ENCODE measurements at regions of chr1 and their contacts with region 1.

Region 1: GRCh38 chr1:116372587-116373444 is at the start of gene ATP1A1:
- DNase-seq: peak; percentile 98
- H3K4me3 Mint-ChIP-seq: peak within 1 kb of the TSS; percentile 98
- H3K27ac Mint-ChIP-seq: peak within 1 kb of the TSS; percentile 89
- H3K4me1 Mint-ChIP-seq: peaks cover 43% of the 10 kb centered on the region
- H3K27me3 Mint-ChIP-seq: peaks cover 26% of the 10 kb centered on the region
- total RNA-seq, gene ATP1A1: 238 to 241 TPM

Region 2: DNA sequence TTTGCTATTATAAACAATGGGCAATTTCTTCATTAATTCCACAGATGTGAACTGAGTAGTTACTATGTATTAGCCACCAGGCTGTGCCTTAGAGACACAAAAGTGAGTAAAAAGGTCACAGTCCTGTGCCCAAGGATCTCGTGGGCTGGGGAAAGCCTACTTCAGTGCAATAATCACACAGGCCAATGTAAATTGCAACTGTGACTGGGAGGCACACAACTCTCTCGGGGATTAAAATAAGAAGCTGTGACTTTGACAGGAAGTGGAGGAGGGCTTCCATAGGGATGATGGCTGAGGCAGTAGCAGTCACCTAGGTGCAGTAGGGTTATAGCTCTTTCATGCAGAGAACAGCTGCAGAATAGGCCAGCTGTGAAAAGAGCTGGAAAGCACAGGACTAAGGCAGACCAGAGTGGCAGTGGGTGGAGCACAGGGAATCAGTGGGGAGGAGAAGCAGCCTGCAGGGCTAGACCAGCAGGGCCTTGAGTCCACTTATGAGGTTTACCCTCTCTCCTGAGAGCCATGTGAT is 139.8 kb before region 1 on chr1:
- CTCF ChIA-PET with region 1: no interaction called
- POLR2A ChIA-PET with region 1: no interaction called
- DNase-seq: no peak
- H3K4me3 Mint-ChIP-seq: no peak overlapping the region
- H3K27ac Mint-ChIP-seq: no peak overlapping the region
- H3K4me1 Mint-ChIP-seq: no peaks in the 10 kb centered on the region
- H3K27me3 Mint-ChIP-seq: no peaks in the 10 kb centered on the region

Region 3: DNA sequence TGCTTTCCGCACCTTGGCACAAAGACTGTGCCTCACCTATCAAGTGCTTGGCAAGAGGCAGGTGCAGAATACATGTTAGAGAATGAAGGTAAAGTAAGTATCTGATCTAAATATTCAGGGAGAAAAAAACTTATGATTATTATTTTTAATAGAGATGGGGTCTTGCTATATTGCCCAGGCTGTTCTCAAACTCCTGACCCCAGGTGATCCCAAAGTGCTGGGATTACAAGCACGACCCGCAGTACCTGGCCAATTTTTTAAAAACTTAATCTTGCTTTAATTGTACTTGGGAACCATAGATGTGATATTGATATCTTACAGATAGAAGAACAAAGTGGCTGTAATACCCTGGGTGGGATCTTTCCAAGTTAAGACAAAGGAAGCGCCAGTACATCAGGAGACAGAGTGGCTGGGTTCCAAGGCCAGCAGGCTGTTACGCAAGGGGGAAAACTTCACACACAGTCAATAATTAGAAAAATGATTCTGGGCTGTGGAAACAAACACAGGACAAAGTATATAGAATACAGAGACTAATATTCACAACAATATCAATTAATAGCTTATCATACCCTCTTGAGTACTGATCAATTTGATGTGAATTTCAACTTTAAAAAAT is 58.4 kb before region 1 on chr1:
- CTCF ChIA-PET with region 1: no interaction called
- POLR2A ChIA-PET with region 1: no interaction called
- DNase-seq: no peak
- H3K4me3 Mint-ChIP-seq: no peak overlapping the region
- H3K27ac Mint-ChIP-seq: no peak overlapping the region
- H3K4me1 Mint-ChIP-seq: no peaks in the 10 kb centered on the region
- H3K27me3 Mint-ChIP-seq: no peaks in the 10 kb centered on the region

Region 4: GRCh38 chr1:116325922-116326321 is 46.9 kb before region 1 on chr1:
- CTCF ChIA-PET with region 1: no interaction called
- POLR2A ChIA-PET with region 1: interaction called, 10 read pairs
- DNase-seq: peak; percentile 51
- H3K4me3 Mint-ChIP-seq: peak overlapping the region; percentile 25
- H3K27ac Mint-ChIP-seq: peak overlapping the region; percentile 94
- H3K4me1 Mint-ChIP-seq: peaks cover 39% of the 10 kb centered on the region
- H3K27me3 Mint-ChIP-seq: no peaks in the 10 kb centered on the region